WTC11 (cell line): ENCODE measurements at regions of chr14 and their contacts with region 1.

Region 1: GRCh38 chr14:91354979-91355685 is 62.5 kb downstream of the CCDC88C start:
- DNase-seq: peak; percentile 83
- ATAC-seq: peak; percentile 91
- H3K4me3 Mint-ChIP-seq: no peak overlapping the region
- H3K27ac Mint-ChIP-seq: peak overlapping the region; percentile 47
- H3K4me1 Mint-ChIP-seq: peaks cover 43% of the 10 kb centered on the region
- H3K27me3 Mint-ChIP-seq: no peaks in the 10 kb centered on the region
- CTCF ChIP-seq: peak; percentile 76

Region 2: DNA sequence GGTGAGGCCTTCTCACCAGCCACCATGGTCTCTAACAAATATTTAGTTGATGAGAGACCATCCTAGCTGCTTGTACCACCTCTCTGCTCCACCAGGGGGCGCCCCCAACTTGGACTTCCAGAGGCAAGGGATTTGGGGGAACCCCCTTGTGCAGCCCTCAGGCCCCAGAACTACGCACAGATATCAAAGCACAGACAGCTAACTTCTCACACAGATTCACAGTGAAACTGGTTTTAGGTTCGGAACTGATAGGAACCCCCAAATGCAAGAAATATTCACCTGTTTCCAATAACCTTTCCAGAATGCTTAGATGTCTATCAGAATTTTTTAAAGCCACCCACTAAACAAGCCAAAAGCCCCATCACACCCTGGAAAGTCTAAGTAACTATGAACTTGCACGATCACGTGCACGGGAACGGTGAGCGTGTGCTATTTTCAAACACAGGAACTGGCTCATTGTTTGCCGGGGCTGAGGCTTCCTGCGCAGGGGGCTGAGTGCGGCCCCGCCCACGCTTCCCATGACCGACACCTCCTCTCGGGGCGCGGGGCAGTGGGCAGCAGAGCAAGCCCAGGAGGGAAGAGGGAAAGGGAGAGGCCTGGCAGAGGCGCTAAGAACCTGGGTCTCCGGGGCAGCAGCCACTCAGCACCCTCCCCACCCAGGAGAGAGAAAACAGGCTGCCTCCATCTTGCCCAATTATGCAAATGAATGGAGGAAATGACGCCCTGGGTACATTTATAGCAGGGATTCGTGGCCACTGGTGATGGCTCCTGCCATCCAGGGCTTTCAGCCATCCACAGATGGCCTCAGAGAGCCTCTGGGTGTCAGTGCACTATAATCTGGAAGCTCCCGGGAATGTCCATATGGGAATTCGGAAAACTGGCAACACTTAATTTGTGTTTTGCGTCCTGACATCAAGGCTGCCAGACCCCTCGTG is 31.2 kb before region 1 on chr14:
- CTCF ChIA-PET with region 1: interaction called, 28 read pairs
- POLR2A ChIA-PET with region 1: no interaction called
- DNase-seq: peak; percentile 90
- ATAC-seq: peak; percentile 81
- H3K4me3 Mint-ChIP-seq: no peak overlapping the region
- H3K27ac Mint-ChIP-seq: 0 out of 2 replicates have a peak overlapping the region, but pooled peaks have one; percentile 18
- H3K4me1 Mint-ChIP-seq: peaks cover 9% of the 10 kb centered on the region
- H3K27me3 Mint-ChIP-seq: no peaks in the 10 kb centered on the region
- CTCF ChIP-seq: peak; percentile 98

Region 3: GRCh38 chr14:91367173-91368171 is 12.3 kb after region 1 on chr14:
- CTCF ChIA-PET with region 1: interaction called, 44 read pairs
- POLR2A ChIA-PET with region 1: no interaction called
- DNase-seq: no peak
- ATAC-seq: no peak
- H3K4me3 Mint-ChIP-seq: no peak overlapping the region
- H3K27ac Mint-ChIP-seq: peak overlapping the region; percentile 89
- H3K4me1 Mint-ChIP-seq: peaks cover 64% of the 10 kb centered on the region
- H3K27me3 Mint-ChIP-seq: no peaks in the 10 kb centered on the region
- CTCF ChIP-seq: no peak

Region 4: GRCh38 chr14:91396959-91397815 is 42.1 kb after region 1 on chr14:
- CTCF ChIA-PET with region 1: interaction called, 41 read pairs
- POLR2A ChIA-PET with region 1: no interaction called
- DNase-seq: peak; percentile 51
- ATAC-seq: peak; percentile 56
- H3K4me3 Mint-ChIP-seq: peak overlapping the region; percentile 2; the same call in 1 of the 2 replicates
- H3K27ac Mint-ChIP-seq: peak overlapping the region; percentile 97
- H3K4me1 Mint-ChIP-seq: peaks cover 85% of the 10 kb centered on the region
- H3K27me3 Mint-ChIP-seq: no peaks in the 10 kb centered on the region
- CTCF ChIP-seq: no peak

Region 5: GRCh38 chr14:91424813-91425530 is 69.8 kb after region 1 on chr14:
- CTCF ChIA-PET with region 1: interaction called, 25 read pairs
- POLR2A ChIA-PET with region 1: no interaction called
- DNase-seq: no peak
- ATAC-seq: no peak
- H3K4me3 Mint-ChIP-seq: no peak overlapping the region
- H3K27ac Mint-ChIP-seq: no peak overlapping the region
- H3K4me1 Mint-ChIP-seq: no peaks in the 10 kb centered on the region
- H3K27me3 Mint-ChIP-seq: peaks cover 7% of the 10 kb centered on the region
- CTCF ChIP-seq: no peak